Naive thymus-derived CD8-positive, alpha-beta T cell (primary cell): ENCODE measurements at regions of chr15 and their contacts with region 1.

Region 1: DNA sequence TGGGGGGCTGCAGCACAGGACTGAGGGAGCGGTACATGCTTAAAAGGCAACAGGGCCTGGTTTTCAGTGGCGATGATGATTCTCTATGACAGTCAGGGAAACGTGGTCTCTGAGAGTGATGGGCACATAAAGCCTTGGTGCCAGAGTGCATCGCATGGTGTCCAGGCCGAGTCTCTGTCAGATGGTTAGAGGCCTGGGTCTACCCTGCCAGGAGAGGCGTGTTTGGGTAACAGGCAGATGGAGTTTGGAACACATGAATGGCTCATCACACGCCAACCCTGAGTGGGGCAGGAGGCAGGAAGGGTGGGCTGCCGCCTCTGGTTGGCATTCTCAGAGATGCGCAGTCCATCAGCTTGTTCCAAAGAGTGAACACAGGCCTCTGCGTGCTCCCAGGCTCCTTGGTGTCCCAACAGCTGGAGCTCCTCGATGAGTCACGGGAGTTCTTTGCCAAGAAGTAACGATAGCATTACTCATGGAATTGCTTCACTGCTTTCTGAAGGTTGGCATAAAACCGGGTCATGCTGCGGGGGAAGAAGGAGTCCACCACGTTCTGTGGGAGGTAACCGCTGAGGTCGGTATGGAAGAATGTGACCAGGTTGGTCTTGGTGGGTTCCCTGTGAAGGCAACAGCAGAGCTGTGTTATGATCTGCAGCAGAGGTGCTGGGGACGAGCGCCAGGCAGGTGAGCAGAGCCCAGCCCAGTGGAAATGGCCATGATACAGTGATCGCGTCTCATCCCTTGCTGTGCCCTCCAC is 11.0 kb downstream of the STARD5 start:
- DNase-seq: no peak
- ATAC-seq: no peak
- H3K4me3 Mint-ChIP-seq: peak overlapping the region in 6 of 10 donors; percentile 3 to 68 (median 28)
- H3K27ac Mint-ChIP-seq: peak overlapping the region; percentile 80 to 99 (median 93)
- H3K4me1 Mint-ChIP-seq: peaks cover 48 to 98% (median 91%) of the 10 kb centered on the region in 4 donors
- H3K27me3 Mint-ChIP-seq: no peaks in the 10 kb centered on the region

Region 2: GRCh38 chr15:81274931-81275707 is 37.8 kb before region 1 on chr15:
- POLR2A ChIA-PET with region 1: interaction called, 66 read pairs
- DNase-seq: peak; percentile 62 to 89 (median 78)
- ATAC-seq: peak; percentile 93 to 95
- H3K4me3 Mint-ChIP-seq: peak overlapping the region; percentile 37 to 81 (median 62)
- H3K27ac Mint-ChIP-seq: peak overlapping the region; percentile 79 to 93 (median 86)
- H3K4me1 Mint-ChIP-seq: peaks cover 23 to 50% (median 41%) of the 10 kb centered on the region in 4 donors
- H3K27me3 Mint-ChIP-seq: no peaks in the 10 kb centered on the region

Region 3: GRCh38 chr15:81286621-81287121 is 26.3 kb before region 1 on chr15:
- POLR2A ChIA-PET with region 1: interaction called, 449 read pairs
- DNase-seq: peak in 5 of 10 donors; percentile 33 to 77 (median 67)
- ATAC-seq: peak; percentile 91 to 97
- H3K4me3 Mint-ChIP-seq: peak overlapping the region; percentile 64 to 87 (median 78)
- H3K27ac Mint-ChIP-seq: peak overlapping the region; percentile 93 to 99 (median 97)
- H3K4me1 Mint-ChIP-seq: peaks cover 57 to 89% (median 82%) of the 10 kb centered on the region in 4 donors
- H3K27me3 Mint-ChIP-seq: no peaks in the 10 kb centered on the region

Region 4: DNA sequence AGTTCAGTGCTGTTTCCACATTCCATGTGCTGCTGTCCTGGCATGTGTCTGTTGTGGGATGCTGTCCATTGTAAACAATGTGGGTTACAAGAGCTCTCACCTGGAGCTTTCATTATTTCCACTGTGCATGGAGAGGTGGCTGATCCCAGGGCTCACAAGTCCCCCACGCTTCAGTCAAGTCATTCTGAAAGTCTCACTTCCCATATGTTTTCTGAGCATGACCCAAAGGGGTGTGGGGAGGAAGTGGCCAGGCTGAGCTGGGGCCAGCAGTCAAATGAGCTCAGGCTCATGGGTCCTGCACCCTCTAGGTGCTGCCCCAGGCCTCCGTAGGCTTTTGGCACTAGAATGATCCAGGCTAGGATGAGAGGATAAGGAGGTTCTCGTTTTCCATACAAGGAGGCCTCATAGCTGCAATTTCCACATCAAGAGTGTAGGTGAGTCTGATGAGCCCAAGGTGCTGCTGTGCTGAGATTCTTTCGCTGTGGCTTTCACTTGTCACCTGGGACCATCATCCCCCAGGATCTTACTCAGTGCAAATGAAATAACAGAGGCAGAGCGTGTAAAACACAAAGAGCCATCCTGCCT is 11.1 kb before region 1 on chr15:
- POLR2A ChIA-PET with region 1: interaction called, 449 read pairs
- DNase-seq: no peak
- ATAC-seq: no peak
- H3K4me3 Mint-ChIP-seq: peak overlapping the region; percentile 96 to 100 (median 100)
- H3K27ac Mint-ChIP-seq: peak overlapping the region; percentile 92 to 100 (median 97)
- H3K4me1 Mint-ChIP-seq: peaks cover 39 to 82% (median 64%) of the 10 kb centered on the region in 4 donors
- H3K27me3 Mint-ChIP-seq: no peaks in the 10 kb centered on the region

Region 5: GRCh38 chr15:81323944-81324881 is 11.2 kb after region 1 on chr15 and contains the start of gene STARD5:
- POLR2A ChIA-PET with region 1: interaction called, 123 read pairs
- DNase-seq: peak; percentile 90 to 97 (median 93)
- ATAC-seq: peak; percentile 97 to 98
- H3K4me3 Mint-ChIP-seq: peak within 1 kb of the TSS; percentile 89 to 99 (median 96)
- H3K27ac Mint-ChIP-seq: peak within 1 kb of the TSS; percentile 77 to 98 (median 95)
- H3K4me1 Mint-ChIP-seq: peaks cover 25 to 55% (median 45%) of the 10 kb centered on the region in 4 donors
- H3K27me3 Mint-ChIP-seq: no peaks in the 10 kb centered on the region
- polyA plus RNA-seq, gene STARD5: 3.8 to 6.9 (median 4.5) TPM